Mammary epithelial cell (primary cell): ENCODE measurements at regions of chr9 and their contacts with region 1.

Region 1: GRCh38 chr9:136339173-136339957 is 12.0 kb downstream of the GPSM1 start:
- DNase-seq: peak; percentile 38
- H3K4me3 ChIP-seq: no peak overlapping the region
- H3K27ac ChIP-seq: no peak overlapping the region
- H3K4me1 ChIP-seq: peaks cover 14% of the 10 kb centered on the region
- H3K27me3 ChIP-seq: no peaks in the 10 kb centered on the region
- CTCF ChIP-seq: peak; percentile 93

Region 2: DNA sequence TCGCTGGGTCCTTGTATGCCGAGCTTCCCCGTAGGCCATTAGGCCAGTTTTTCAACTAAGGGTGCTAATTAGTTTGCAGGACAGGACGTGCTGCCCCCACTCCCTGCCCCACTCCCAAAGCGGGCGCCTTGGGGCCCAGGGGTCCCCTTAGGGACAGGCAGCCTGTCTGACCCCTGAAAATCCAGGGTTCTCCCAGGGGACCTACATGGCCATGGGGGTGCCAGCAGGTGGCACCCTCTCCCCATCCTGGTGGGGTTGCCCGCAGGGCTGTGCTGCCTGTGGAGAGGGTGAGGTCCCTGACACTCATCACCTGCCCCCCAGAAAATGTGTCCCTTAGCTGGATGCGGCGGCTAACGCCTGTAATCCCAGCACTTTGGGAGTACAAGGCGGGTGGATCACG is 26.9 kb before region 1 on chr9:
- CTCF ChIA-PET with region 1: no interaction called
- dilution Hi-C with region 1: no loop called
- in situ Hi-C with region 1: no loop called
- intact Hi-C with region 1: loop called (anchors 2 kb)
- DNase-seq: no peak
- H3K4me3 ChIP-seq: no peak overlapping the region
- H3K27ac ChIP-seq: no peak overlapping the region
- H3K4me1 ChIP-seq: peaks cover 15% of the 10 kb centered on the region
- H3K27me3 ChIP-seq: no peaks in the 10 kb centered on the region
- CTCF ChIP-seq: peak; percentile 46 to 88

Region 3: DNA sequence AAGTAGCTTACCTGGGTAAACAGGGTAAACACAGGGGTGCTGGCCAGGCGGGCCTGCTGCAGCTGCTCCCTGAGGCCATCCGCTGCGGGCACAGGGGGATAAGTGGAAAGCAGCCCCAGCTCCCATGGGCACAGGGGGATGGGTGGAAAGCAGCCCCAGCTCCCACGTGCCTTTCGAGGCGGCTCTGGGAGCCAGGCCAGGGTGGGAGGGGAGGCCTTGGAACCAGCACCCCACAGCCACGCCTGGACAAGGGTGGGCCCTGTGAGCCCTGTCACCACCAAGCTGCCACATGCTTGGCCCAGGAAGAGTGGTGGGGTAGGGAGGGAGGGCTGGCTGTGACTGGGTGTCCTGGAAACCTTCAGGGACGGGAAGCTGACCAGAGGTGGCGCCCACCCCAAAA is 41.9 kb after region 1 on chr9:
- CTCF ChIA-PET with region 1: no interaction called
- dilution Hi-C with region 1: loop called (anchors 5 kb)
- in situ Hi-C with region 1: no loop called
- intact Hi-C with region 1: no loop called
- DNase-seq: no peak
- H3K4me3 ChIP-seq: no peak overlapping the region
- H3K27ac ChIP-seq: no peak overlapping the region
- H3K4me1 ChIP-seq: no peaks in the 10 kb centered on the region
- H3K27me3 ChIP-seq: no peaks in the 10 kb centered on the region
- CTCF ChIP-seq: no peak